ENCODE measurements at regions of chr21 and their contacts with region 1.

Region 1: GRCh38 chr21:19368944-19369343 is 965.4 kb upstream of the TMPRSS15 start:
- DNase-seq: no peak
- ATAC-seq: no peak
- H3K4me3 ChIP-seq: no peak overlapping the region
- H3K27ac ChIP-seq: no peak overlapping the region
- H3K4me1 ChIP-seq: no peaks in the 10 kb centered on the region
- H3K27me3 ChIP-seq: no peaks in the 10 kb centered on the region
- CTCF ChIP-seq: no peak

Region 2: DNA sequence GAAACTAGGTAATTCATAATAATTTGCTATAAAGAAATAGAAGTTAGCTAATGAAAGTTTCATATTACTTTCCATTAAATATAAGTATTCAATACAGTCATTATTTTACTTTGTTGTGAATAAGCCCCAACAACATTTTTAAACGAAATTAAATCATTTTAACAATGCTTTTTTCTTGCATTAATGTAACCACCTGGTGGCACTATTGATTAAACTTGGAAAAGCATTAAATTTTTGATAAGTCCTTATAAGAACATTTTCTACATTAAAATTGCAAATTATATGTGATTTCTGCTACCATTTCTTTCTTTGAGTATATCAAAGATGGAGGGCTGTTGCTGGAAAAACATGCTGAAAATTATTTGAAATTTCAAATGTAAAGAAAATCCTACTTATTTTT is 46.6 kb before region 1 on chr21:
- intact Hi-C with region 1: loop called in 1 of 10 experiments (anchors 10 kb)
- DNase-seq: no peak
- ATAC-seq: no peak
- H3K4me3 ChIP-seq: no peak overlapping the region
- H3K27ac ChIP-seq: no peak overlapping the region
- H3K4me1 ChIP-seq: no peaks in the 10 kb centered on the region
- H3K27me3 ChIP-seq: no peaks in the 10 kb centered on the region
- CTCF ChIP-seq: peak in 3 of 9 donors; percentile 8 to 19 (median 18)

Region 3: GRCh38 chr21:19853709-19854575 is 485.0 kb after region 1 on chr21:
- intact Hi-C with region 1: loop called in 1 of 10 experiments (anchors 5 kb)
- DNase-seq: no peak
- ATAC-seq: no peak
- H3K4me3 ChIP-seq: no peak overlapping the region
- H3K27ac ChIP-seq: no peak overlapping the region
- H3K4me1 ChIP-seq: no peaks in the 10 kb centered on the region
- H3K27me3 ChIP-seq: no peaks in the 10 kb centered on the region
- CTCF ChIP-seq: no peak

Region 4: GRCh38 chr21:20591284-20591683 is 1222.3 kb after region 1 on chr21:
- intact Hi-C with region 1: no loop called
- DNase-seq: no peak
- ATAC-seq: no peak
- H3K4me3 ChIP-seq: no peak overlapping the region
- H3K27ac ChIP-seq: no peak overlapping the region
- H3K4me1 ChIP-seq: no peaks in the 10 kb centered on the region
- H3K27me3 ChIP-seq: no peaks in the 10 kb centered on the region
- CTCF ChIP-seq: no peak